H1 (cell line): ENCODE measurements at regions of chr11 and their contacts with region 1.

Region 1: GRCh38 chr11:61701242-61701886 is 21.2 kb downstream of the DAGLA start:
- DNase-seq: peak in 1 of 2 experiments; percentile 76
- H3K4me3 ChIP-seq: no peak overlapping the region; a peak in 1 of 8 replicates
- H3K27ac ChIP-seq: no peak overlapping the region
- H3K4me1 ChIP-seq: peaks cover 0 to 13% (median 2%) of the 10 kb centered on the region in 4 experiments; a peak in 4 of 7 replicates
- H3K27me3 ChIP-seq: no peaks in the 10 kb centered on the region; a peak in 1 of 7 replicates
- CTCF ChIP-seq: peak in 2 of 3 experiments; percentile 49 to 65; a peak in 3 of 4 replicates
- EP300 ChIP-seq: no peak
- POLR2A ChIP-seq: no peak
- RAD21 ChIP-seq: peak; percentile 40 to 56; a peak in 3 of 4 replicates

Region 2: GRCh38 chr11:61679893-61680621 is 21.3 kb before region 1 on chr11 and contains the start of gene DAGLA:
- CTCF ChIA-PET with region 1: interaction called, 15 read pairs
- POLR2A ChIA-PET with region 1: no interaction called
- DNase-seq: peak in 1 of 2 experiments; percentile 90
- H3K4me3 ChIP-seq: peak within 1 kb of the TSS; percentile 6 to 50 (median 26)
- H3K27ac ChIP-seq: no peak within 1 kb of the TSS
- H3K4me1 ChIP-seq: peaks cover 0 to 12% (median 4%) of the 10 kb centered on the region in 4 experiments; a peak in 5 of 7 replicates
- H3K27me3 ChIP-seq: peaks cover 0 to 19% (median 12%) of the 10 kb centered on the region in 4 experiments; a peak in 5 of 7 replicates
- CTCF ChIP-seq: peak; percentile 86 to 99 (median 87)
- EP300 ChIP-seq: 0 out of 3 replicates have a peak, but pooled peaks of 1 of the 2 experiments have one; percentile 3
- POLR2A ChIP-seq: no peak
- RAD21 ChIP-seq: peak; percentile 53 to 71
- total RNA-seq, gene DAGLA: 6.4 and 6.6 TPM in 2 replicates

Region 3: GRCh38 chr11:61718621-61719302 is 17.4 kb after region 1 on chr11:
- CTCF ChIA-PET with region 1: interaction called, 15 read pairs
- POLR2A ChIA-PET with region 1: interaction called, 3 read pairs
- DNase-seq: peak in 1 of 2 experiments; percentile 87
- H3K4me3 ChIP-seq: peak overlapping the region; percentile 18 to 62 (median 32); a peak in 7 of 8 replicates
- H3K27ac ChIP-seq: no peak overlapping the region; the same call in 1 of the 2 replicates
- H3K4me1 ChIP-seq: peaks cover 0 to 34% (median 23%) of the 10 kb centered on the region in 4 experiments; a peak in 6 of 7 replicates
- H3K27me3 ChIP-seq: no peaks in the 10 kb centered on the region
- CTCF ChIP-seq: no peak
- EP300 ChIP-seq: no peak
- POLR2A ChIP-seq: peak in 1 of 2 experiments; percentile 68; a peak in 2 of 3 replicates
- RAD21 ChIP-seq: no peak

Region 4: DNA sequence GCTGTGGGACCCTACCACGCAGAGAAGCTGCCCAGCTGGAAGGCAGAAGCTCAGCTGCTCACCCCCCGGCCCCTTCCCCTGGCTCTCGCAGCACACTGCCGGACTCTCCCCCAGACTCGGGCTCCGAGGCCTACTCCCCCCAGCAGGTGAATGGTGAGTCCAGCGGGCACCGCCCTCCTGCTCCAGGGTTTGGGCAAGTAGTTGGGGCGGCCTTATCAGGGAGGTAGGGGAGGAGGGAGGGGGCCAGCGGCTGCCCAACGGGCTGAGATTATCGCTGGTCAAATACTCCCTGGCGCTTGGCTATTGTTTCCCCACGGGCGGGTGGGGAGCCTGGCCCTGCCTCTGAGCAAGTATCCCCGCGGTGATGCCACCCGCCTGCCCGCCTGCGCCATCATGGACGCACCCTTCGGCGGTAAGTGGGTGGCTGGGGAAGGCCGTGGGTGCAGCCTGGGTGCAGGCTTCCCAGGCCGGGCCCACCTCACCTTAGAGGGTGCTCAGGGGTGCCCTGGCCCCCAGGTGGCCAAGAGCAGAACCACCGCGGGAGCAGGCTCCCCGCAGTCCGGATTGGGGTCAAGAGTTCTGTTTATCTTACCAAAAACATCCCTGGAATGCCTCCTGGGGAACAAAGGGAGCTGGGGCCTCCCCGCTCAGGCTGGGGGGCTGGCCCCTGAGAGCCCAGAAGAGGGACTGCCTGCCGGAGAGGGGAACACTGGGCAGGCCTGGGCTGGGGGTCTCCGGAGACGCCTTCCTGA is 68.0 kb after region 1 on chr11:
- CTCF ChIA-PET with region 1: no interaction called
- POLR2A ChIA-PET with region 1: no interaction called
- DNase-seq: no peak
- H3K4me3 ChIP-seq: no peak overlapping the region
- H3K27ac ChIP-seq: no peak overlapping the region; the same call in 1 of the 2 replicates
- H3K4me1 ChIP-seq: peaks cover 0 to 21% (median 15%) of the 10 kb centered on the region in 4 experiments; a peak in 5 of 7 replicates
- H3K27me3 ChIP-seq: no peaks in the 10 kb centered on the region
- CTCF ChIP-seq: peak; percentile 36 to 44 (median 43)
- EP300 ChIP-seq: no peak
- POLR2A ChIP-seq: no peak
- RAD21 ChIP-seq: no peak; a peak in 1 of 4 replicates

Region 5: DNA sequence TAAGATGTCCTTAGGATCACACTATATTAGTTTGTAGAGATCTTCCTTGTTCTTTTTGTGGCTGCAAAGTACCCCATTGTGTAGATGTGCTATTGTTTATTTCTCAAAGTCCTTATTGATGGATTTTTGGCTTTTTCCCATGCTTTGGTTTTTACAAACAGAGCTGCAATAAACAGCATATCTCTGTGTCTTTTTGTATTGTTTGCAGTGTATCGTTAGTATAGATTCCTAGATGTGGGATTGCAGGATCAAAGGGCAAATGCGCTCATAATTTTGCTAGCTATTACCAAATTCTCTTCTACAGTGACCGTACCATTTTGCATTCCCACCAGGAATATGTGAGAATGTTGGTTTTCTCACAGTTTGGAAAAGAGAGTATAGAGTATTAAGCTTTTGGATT is 293.6 kb after region 1 on chr11:
- CTCF ChIA-PET with region 1: no interaction called
- POLR2A ChIA-PET with region 1: no interaction called
- DNase-seq: no peak
- H3K4me3 ChIP-seq: no peak overlapping the region
- H3K27ac ChIP-seq: no peak overlapping the region
- H3K4me1 ChIP-seq: peaks cover 0 to 5% (median under 1%) of the 10 kb centered on the region in 4 experiments; a peak in 1 of 7 replicates
- H3K27me3 ChIP-seq: no peaks in the 10 kb centered on the region
- CTCF ChIP-seq: no peak
- EP300 ChIP-seq: no peak
- POLR2A ChIP-seq: no peak
- RAD21 ChIP-seq: no peak